Head of caudate nucleus (tissue), 42 donors: ENCODE measurements at regions of chr1 and their contacts with region 1.

Region 1: GRCh38 chr1:207404849-207405525 is 49.1 kb upstream of the CR2 start:
- DNase-seq: peak in 5 of 42 donors; percentile 27 to 58 (median 39)

Region 2: GRCh38 chr1:207084701-207085180 is 320.2 kb before region 1 on chr1:
- intact Hi-C with region 1: loop called (anchors 5 kb)
- DNase-seq: peak in 39 of 42 donors; percentile 11 to 86 (median 53)

Region 3: GRCh38 chr1:207321079-207321789 is 83.8 kb before region 1 on chr1 and contains the start of gene CD55:
- intact Hi-C with region 1: loop called (anchors 5 kb)
- DNase-seq: peak; percentile 76 to 95 (median 88)